Natural killer cell (primary cell): ENCODE measurements at regions of chr11 and their contacts with region 1.

Region 1: GRCh38 chr11:75802913-75803820 is 11.8 kb upstream of the UVRAG start:
- DNase-seq: peak; percentile 71 to 85
- ATAC-seq: peak; percentile 87 to 99 (median 98)
- H3K4me3 ChIP-seq: no peak overlapping the region
- H3K4me3 Mint-ChIP-seq: no peak overlapping the region
- H3K27ac ChIP-seq: no peak overlapping the region
- H3K27ac Mint-ChIP-seq: no peak overlapping the region
- H3K4me1 ChIP-seq: peaks cover 20% of the 10 kb centered on the region
- H3K4me1 Mint-ChIP-seq: no peaks in the 10 kb centered on the region
- H3K27me3 ChIP-seq: no peaks in the 10 kb centered on the region
- H3K27me3 Mint-ChIP-seq: no peaks in the 10 kb centered on the region
- CTCF ChIP-seq: peak; percentile 85

Region 2: DNA sequence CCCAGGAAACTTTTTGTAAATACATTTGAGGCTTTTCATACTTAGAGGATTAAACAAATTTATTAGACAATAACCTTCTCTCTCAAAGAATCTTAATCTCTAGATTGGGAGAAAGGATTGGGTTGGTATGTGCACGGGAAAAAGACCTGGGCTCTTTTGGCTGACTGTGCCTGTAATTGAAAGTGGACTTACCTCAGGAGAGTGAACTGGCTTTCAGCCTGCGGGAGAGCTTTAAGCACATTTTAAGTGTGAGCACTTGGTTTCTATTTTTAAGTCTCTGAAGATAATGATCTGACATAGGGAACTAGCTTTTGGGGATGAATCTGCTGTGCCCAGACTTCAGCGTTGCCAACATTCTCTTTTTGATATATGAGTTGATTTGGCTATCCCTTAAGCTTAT is 47.6 kb after region 1 on chr11:
- intact Hi-C with region 1: no loop called
- DNase-seq: no peak
- ATAC-seq: no peak
- H3K4me3 ChIP-seq: no peak overlapping the region
- H3K4me3 Mint-ChIP-seq: no peak overlapping the region
- H3K27ac ChIP-seq: no peak overlapping the region
- H3K27ac Mint-ChIP-seq: peak overlapping the region; percentile 52 to 84
- H3K4me1 ChIP-seq: peaks cover 5% of the 10 kb centered on the region
- H3K4me1 Mint-ChIP-seq: peaks cover 31% of the 10 kb centered on the region in 2 donors
- H3K27me3 ChIP-seq: no peaks in the 10 kb centered on the region
- H3K27me3 Mint-ChIP-seq: no peaks in the 10 kb centered on the region
- CTCF ChIP-seq: no peak

Region 3: DNA sequence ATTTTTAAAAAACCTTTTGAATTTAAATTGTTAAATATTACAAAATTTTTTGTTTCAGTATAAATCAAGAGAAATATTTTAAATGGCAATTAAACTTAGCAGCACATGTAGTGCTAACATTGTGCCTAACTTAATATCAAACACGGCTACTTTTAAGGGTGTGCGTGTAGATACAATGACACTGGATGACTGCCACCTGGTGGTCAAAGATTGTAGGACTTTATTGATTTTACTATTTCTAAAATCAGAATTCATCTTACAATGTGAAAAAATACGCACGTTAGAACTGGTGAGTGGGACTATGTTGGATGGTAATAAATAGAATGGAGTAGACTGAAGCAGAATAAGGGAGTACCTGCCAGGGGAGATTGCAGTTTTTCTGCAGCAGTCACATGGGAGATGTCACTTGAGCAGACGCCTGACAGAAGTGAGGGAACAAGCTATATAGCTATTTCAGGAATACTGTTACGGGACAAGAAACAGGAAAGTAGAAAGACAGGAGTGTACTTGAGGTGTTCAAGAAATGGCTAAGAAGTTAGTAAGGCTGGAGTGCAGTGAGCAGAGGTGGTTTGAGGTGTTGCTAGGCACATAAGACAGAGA is 64.7 kb after region 1 on chr11:
- intact Hi-C with region 1: loop called (anchors 1 kb)
- DNase-seq: peak in 1 of 2 donors; percentile 82
- ATAC-seq: peak; percentile 58 to 75 (median 71)
- H3K4me3 ChIP-seq: no peak overlapping the region
- H3K4me3 Mint-ChIP-seq: no peak overlapping the region
- H3K27ac ChIP-seq: no peak overlapping the region
- H3K27ac Mint-ChIP-seq: no peak overlapping the region
- H3K4me1 ChIP-seq: no peaks in the 10 kb centered on the region
- H3K4me1 Mint-ChIP-seq: peaks cover 6 to 13% of the 10 kb centered on the region in 2 donors
- H3K27me3 ChIP-seq: no peaks in the 10 kb centered on the region
- H3K27me3 Mint-ChIP-seq: no peaks in the 10 kb centered on the region
- CTCF ChIP-seq: peak; percentile 88

Region 4: DNA sequence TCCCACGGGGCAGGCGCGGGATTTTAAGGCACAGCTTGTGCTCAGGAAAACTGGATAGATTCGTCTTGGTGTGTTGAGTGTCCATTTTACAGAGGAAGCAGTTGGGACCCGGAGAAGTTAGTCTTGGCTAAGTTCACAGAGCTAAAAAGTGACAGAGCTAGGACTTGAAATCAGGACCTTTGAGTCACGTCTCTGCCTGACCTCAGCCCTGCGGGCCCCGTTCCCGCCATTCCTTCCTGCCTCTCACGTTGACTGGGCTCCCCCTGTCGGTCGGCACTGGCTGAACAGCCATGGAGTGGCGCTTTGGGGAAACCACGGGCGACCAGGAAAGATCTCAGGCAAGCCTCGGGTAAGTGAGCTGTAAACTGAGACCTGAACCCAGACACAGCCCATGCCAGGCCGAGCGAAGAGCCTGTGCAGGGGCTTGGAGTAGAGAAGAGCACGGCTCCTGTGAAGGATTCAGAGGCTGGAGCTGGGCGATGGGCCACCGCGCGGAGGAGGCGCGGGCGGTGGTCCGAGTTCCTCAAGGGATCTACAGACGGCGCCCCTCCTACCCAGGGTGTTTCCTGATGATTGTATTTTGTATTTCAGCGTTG is 349.0 kb after region 1 on chr11:
- intact Hi-C with region 1: loop called (anchors 2 kb)
- DNase-seq: peak; percentile 73 to 85
- ATAC-seq: peak; percentile 82 to 85 (median 83)
- H3K4me3 ChIP-seq: peak overlapping the region; percentile 34
- H3K4me3 Mint-ChIP-seq: peak overlapping the region; percentile 84
- H3K27ac ChIP-seq: no peak overlapping the region
- H3K27ac Mint-ChIP-seq: peak overlapping the region; percentile 88 to 92
- H3K4me1 ChIP-seq: peaks cover 30% of the 10 kb centered on the region
- H3K4me1 Mint-ChIP-seq: peaks cover 36 to 38% of the 10 kb centered on the region in 2 donors
- H3K27me3 ChIP-seq: no peaks in the 10 kb centered on the region
- H3K27me3 Mint-ChIP-seq: peaks cover 0 to 2% of the 10 kb centered on the region in 2 donors
- CTCF ChIP-seq: peak; percentile 85

Region 5: GRCh38 chr11:76318744-76319384 is 515.7 kb after region 1 on chr11:
- intact Hi-C with region 1: loop called (anchors 1 kb)
- DNase-seq: peak; percentile 75 to 94
- ATAC-seq: peak; percentile 87 to 98 (median 95)
- H3K4me3 ChIP-seq: no peak overlapping the region
- H3K4me3 Mint-ChIP-seq: no peak overlapping the region
- H3K27ac ChIP-seq: no peak overlapping the region
- H3K27ac Mint-ChIP-seq: no peak overlapping the region
- H3K4me1 ChIP-seq: no peaks in the 10 kb centered on the region
- H3K4me1 Mint-ChIP-seq: no peaks in the 10 kb centered on the region
- H3K27me3 ChIP-seq: no peaks in the 10 kb centered on the region
- H3K27me3 Mint-ChIP-seq: peaks cover 31 to 35% of the 10 kb centered on the region in 2 donors
- CTCF ChIP-seq: peak; percentile 84